ENCODE measurements at regions of chr9 and their contacts with region 1.

Region 1: DNA sequence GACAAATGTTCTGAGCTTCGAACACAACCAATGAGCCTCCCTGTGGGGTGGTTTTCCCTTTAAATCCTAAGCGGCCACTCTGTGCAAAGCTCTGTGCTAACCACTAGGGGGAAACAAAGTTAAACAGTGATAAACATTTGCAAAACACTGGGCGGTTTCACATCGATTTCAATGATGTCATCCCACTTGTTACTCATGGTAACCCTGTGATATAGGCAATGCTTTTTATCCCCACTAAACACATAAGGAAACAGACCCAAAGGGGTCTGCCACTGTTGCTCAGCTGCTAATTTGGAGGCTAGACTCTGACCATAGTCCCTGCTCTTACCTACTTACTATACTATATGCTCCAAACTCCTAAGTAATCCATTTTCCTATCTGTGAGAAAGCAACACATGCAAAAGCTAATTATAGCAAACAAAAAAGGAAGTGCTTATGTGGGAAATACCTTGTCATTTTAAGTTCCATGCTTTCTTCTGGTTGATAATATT is 57.3 kb downstream of the PTPN3 start:
- H3K4me3 ChIP-seq: no peak overlapping the region
- H3K27ac ChIP-seq: no peak overlapping the region
- H3K4me1 ChIP-seq: no peaks in the 10 kb centered on the region
- CTCF ChIP-seq: no peak

Region 2: DNA sequence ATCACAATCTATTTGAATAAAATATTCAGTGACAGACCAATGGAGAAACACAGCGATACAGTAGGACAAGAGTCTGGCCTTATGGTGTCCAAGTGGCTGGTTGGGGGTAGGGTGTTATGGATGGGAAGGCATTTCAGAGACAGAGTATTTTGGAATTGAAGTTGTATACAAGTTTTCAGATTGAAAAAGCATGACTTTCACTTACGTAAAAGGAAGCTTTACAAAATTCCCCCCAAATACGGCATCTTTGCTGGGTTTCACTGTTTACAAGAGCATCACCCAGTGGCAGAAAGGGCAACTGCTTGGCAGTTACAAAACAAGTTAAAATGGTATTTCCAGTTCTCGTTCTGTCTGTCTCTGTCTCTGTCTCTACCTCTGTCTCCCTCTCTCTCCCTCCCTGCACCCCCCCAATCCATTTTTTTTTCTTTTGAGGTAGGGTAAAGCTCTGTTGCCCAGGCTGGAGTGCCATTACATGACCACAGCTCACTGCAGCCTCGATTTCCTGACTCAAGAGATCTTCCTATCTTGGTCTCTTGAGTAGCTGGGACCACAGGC is 29.0 kb before region 1 on chr9:
- CTCF ChIA-PET with region 1: interaction called, 25 read pairs
- POLR2A ChIA-PET with region 1: no interaction called
- H3K4me3 ChIP-seq: no peak overlapping the region
- H3K27ac ChIP-seq: no peak overlapping the region
- H3K4me1 ChIP-seq: no peaks in the 10 kb centered on the region
- CTCF ChIP-seq: peak; percentile 16; the same call in 1 of the 2 replicates

Region 3: GRCh38 chr9:109453210-109453842 is 12.5 kb after region 1 on chr9:
- CTCF ChIA-PET with region 1: interaction called, 22 read pairs
- POLR2A ChIA-PET with region 1: no interaction called
- H3K4me3 ChIP-seq: no peak overlapping the region
- H3K27ac ChIP-seq: no peak overlapping the region
- H3K4me1 ChIP-seq: 0 out of 2 replicates have a peak, but pooled peaks cover 3% of the 10 kb centered on the region
- CTCF ChIP-seq: no peak

Region 4: DNA sequence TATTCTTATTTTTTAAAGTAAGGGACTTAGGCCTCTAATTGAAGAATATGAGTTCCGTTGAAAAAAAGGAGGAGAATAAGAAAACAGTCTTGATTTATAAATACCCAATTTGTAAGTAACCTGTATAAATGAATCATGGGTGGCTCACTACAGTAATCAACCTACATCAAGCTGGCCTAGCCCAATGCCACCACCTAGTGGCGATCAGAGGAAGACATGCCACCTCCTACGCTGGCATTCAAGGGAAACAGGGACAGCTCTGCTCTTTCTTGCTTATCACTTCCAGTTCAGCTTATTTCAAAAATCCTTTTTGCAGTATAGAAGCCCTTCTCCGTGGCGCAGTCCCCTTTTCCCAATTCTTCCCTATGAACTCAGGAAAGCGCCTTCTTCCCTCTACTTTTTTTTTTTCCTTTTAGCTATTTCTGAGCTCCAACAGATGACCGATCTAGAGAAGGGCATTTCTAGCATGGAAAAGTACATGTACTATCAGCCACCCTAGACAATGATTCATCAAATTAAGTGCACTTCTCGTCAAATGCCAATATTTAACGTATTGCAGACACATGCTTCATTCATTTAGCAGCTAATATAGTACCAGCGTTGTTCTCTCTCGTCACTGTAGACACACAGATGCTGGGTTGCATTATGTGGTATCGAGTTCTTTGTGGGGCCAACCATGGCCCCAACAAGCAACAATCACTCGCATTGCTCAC is 29.0 kb after region 1 on chr9:
- CTCF ChIA-PET with region 1: interaction called, 140 read pairs
- POLR2A ChIA-PET with region 1: interaction called, 3 read pairs
- H3K4me3 ChIP-seq: no peak overlapping the region
- H3K27ac ChIP-seq: no peak overlapping the region
- H3K4me1 ChIP-seq: peaks cover 20% of the 10 kb centered on the region
- CTCF ChIP-seq: 0 out of 2 replicates have a peak, but pooled peaks have one; percentile 34

Region 5: DNA sequence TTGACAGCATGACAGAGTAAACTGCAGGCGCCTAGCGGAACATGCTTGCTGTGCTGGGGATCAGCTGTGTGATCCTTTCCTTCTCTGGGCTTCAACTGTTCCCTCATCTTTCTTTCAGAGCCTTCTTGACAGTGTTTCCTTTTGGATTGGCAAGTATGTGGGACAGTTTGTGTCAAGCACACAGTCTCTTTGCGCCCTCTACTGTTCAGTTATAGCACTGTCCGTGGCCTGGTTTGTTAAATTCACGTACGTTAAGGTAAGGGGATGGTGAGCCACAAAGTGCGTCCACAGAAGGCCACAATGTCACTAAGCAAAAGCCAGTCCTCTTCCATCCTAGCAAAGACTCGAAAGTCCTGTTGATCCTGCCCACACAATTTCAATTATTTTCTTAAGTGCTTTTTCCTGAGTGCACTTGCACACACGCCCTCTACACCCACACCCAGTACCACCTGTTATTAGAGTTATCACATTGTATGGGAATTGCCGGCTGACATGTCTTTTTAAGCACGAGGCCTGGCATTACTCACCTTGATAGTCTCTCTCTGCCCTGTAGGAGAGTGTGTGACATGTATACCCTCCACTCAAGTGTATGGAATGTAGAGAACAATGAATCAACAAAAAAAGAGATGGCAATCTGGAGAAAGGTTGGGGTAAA is 79.8 kb after region 1 on chr9:
- CTCF ChIA-PET with region 1: interaction called, 18 read pairs
- POLR2A ChIA-PET with region 1: no interaction called
- H3K4me3 ChIP-seq: no peak overlapping the region
- H3K27ac ChIP-seq: no peak overlapping the region
- H3K4me1 ChIP-seq: no peaks in the 10 kb centered on the region
- CTCF ChIP-seq: peak; percentile 68